ENCODE measurements at regions of chr1 and their contacts with region 1.

Region 1: GRCh38 chr1:239976130-239976968 is 115.3 kb upstream of the FMN2 start:
- DNase-seq: peak; percentile 13
- H3K4me3 ChIP-seq: no peak overlapping the region
- H3K27ac ChIP-seq: no peak overlapping the region
- H3K27me3 ChIP-seq: no peaks in the 10 kb centered on the region
- CTCF ChIP-seq: peak; percentile 97

Region 2: DNA sequence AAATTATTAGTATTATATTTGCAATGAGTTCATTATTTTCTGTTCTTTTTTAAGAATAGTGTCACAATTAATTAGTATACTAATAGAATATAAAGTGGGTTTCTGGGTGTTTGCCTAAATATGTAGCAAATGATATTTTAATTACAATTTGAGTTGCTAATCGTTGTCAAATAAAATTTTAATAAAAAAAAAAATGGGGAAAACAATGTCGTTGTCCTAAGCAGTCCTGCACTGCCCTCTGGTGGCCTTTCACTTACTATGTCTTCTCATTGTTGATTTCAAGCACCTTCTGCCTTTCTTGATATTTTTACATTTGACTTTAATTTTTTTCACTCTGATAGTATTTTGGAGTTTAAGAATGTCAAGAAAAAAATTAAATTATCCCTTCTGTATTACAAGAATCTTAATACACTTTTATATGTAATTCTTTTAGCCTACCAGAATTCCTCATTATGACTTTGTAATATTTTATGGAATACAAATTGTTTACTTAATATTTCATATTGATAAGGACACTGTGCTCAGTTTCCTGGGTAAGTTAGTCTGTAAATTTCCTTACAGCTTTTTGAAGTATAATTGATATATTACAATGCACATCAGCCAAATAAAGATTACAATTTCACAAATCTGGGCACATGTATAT is 10.9 kb after region 1 on chr1:
- CTCF ChIA-PET with region 1: interaction called, 13 read pairs
- POLR2A ChIA-PET with region 1: no interaction called
- DNase-seq: peak; percentile 10
- H3K4me3 ChIP-seq: no peak overlapping the region
- H3K27ac ChIP-seq: no peak overlapping the region
- H3K27me3 ChIP-seq: peaks cover 4% of the 10 kb centered on the region
- CTCF ChIP-seq: peak; percentile 79

Region 3: DNA sequence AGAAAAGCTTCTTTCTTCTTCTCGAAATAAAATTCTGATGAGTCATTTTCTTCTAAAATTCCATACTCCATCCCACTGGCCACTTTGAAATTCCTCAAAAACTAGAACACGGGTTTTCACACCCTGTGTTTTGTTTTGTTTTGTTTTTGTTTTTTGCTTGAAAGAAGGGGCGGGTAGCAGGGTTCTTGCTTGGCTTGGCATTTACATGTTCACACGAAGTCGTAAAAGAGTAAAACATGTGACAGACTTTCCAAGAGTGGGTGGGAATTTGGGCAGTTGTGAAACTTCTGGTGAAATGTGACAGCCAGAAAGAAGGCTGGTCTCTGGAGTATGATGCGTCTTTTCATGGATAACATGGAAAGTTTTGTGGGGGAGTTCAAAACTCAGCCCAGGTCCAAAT is 68.3 kb after region 1 on chr1:
- CTCF ChIA-PET with region 1: no interaction called
- POLR2A ChIA-PET with region 1: no interaction called
- DNase-seq: no peak
- H3K4me3 ChIP-seq: no peak overlapping the region
- H3K27ac ChIP-seq: no peak overlapping the region
- H3K27me3 ChIP-seq: no peaks in the 10 kb centered on the region
- CTCF ChIP-seq: no peak

Region 4: GRCh38 chr1:240776237-240776636 is 799.9 kb after region 1 on chr1:
- CTCF ChIA-PET with region 1: interaction called, 10 read pairs
- POLR2A ChIA-PET with region 1: no interaction called
- DNase-seq: no peak
- H3K4me3 ChIP-seq: no peak overlapping the region
- H3K27ac ChIP-seq: no peak overlapping the region
- H3K27me3 ChIP-seq: no peaks in the 10 kb centered on the region
- CTCF ChIP-seq: no peak